ENCODE measurements at regions of chr3 and their contacts with region 1.

Region 1: GRCh38 chr3:53709860-53710674 is 136.2 kb downstream of the CHDH start:
- DNase-seq: peak; percentile 51 to 75 (median 65)
- H3K4me3 ChIP-seq: peak overlapping the region in 2 of 59 donors; percentile 20 to 27
- H3K27ac ChIP-seq: no peak overlapping the region
- H3K27me3 ChIP-seq: no peaks in the 10 kb centered on the region
- CTCF ChIP-seq: peak; percentile 53 to 94 (median 85)

Region 2: GRCh38 chr3:53114011-53114400 is 596.1 kb before region 1 on chr3:
- intact Hi-C with region 1: loop called in 1 of 2 experiments (anchors 10 kb)
- DNase-seq: peak; percentile 66 to 89 (median 83)
- H3K4me3 ChIP-seq: no peak overlapping the region
- H3K27ac ChIP-seq: peak overlapping the region in 23 of 59 donors; percentile 8 to 68 (median 44)
- H3K27me3 ChIP-seq: no peaks in the 10 kb centered on the region
- CTCF ChIP-seq: peak; percentile 83 to 97 (median 93)

Region 3: DNA sequence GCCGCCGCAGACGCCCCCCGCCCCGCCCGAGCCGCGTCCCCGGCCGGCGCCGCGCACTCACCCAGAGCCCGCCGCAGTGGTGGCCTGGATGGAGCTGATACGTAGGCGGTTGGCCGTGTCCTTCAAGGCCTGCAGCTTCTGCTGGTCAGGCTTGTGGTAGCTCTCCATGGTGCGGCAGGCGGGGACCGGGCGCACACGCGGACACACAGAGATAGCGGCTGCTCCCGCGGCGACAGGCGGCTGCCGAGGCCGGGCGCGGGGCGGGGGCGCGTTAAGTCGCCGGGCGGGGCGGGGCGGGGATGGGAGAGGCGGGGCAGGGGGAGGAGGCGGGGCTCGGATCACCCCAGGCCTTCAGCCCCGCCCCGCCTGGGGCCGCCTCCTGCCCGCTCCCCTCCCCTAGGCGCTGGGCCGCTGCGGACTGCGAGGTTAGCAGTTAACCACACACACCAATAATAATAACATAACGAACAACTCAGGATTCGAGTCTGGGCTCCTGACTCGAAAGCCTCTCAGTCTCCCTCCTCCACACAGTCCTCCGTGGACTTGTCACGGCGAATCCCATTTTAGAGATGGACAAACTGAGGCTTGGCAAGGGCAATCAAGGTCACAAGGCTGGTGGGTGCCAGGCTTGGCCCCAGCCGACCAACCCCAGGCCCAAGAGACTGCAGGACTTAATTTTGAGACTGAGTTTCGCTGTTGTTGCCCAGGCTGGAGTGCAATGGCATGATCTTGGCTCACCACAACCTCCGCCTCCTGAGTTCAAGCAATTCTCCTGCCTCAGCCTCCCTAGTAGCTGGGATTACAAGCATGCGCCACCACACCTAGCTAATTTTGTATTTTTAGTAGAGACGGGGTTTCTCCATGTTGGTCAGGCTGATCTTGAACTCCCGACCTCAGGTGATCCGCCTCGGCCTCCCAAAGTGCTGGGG is 454.0 kb before region 1 on chr3 and contains the start of gene TKT:
- intact Hi-C with region 1: loop called in 1 of 2 experiments (anchors 1 kb)
- DNase-seq: peak; percentile 74 to 89 (median 84)
- H3K4me3 ChIP-seq: peak within 1 kb of the TSS; percentile 69 to 97 (median 88)
- H3K27ac ChIP-seq: peak within 1 kb of the TSS; percentile 45 to 95 (median 87)
- H3K27me3 ChIP-seq: no peaks in the 10 kb centered on the region
- CTCF ChIP-seq: peak in 3 of 56 donors; percentile 6 to 14 (median 12)
- total RNA-seq, gene TKT: 130 to 245 (median 170) TPM

Region 4: DNA sequence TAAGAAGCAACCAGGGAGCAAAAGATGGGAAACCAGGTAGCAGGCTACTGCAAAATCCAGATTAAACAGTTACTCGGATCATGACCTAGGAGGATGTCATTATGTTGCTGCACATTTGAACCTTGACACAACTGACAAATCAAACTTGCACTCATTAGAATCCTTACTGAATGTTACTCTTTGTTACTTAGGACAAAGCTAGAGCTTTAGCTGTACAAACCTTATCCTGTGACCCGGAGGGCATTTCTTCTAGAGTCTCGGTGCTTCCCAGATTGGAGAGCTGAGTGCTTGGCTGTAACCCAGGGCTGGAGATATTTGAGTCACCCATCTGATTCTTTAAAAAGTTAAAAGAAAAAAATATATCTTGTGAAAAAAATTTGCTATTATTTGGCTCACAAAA is 406.1 kb before region 1 on chr3:
- intact Hi-C with region 1: loop called (anchors 2 to 5 kb)
- DNase-seq: peak in 1 of 10 donors; percentile 11
- H3K4me3 ChIP-seq: no peak overlapping the region
- H3K27ac ChIP-seq: peak overlapping the region in 52 of 59 donors; percentile 2 to 70 (median 52)
- H3K27me3 ChIP-seq: no peaks in the 10 kb centered on the region
- CTCF ChIP-seq: no peak

Region 5: DNA sequence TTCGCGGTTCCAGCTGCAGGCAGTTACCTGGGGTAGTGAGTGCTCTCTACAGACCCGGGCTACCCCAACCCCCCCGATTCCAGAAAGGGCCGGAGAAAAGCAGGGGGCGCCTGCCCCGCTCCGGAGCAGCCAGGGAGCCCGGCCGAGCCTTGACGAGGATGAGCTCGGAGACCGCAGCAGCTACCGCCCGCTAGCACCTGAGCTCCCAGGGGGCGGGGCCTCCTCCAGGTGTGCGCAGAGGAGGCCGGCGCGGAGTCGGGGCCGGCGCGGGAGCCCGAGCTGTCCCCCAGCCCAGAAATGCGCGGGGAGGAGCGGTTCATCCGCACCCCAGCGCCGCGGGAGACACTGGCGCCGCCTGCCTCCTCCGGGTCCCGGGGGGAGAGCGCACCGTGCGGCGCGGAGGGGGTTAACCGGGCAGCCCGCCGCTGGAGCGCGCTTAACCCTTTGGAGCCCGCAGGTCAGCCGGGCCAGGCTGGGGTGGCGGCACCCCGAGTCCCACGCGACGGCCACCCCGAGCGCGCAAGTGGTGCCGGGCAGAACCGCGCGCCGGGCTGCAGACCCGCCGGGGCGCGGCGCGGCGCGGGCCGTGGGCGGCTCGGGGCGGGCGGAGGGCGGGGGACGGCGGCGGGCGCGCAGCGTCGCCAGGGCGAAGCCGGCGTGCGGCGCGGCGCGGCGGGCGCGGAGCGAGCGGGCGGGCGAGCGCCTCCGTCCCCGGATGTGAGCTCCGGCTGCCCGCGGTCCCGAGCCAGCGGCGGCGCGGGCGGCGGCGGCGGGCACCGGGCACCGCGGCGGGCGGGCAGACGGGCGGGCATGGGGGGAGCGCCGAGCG is 215.9 kb before region 1 on chr3 and contains the start of gene CACNA1D:
- intact Hi-C with region 1: loop called in 1 of 2 experiments (anchors 5 kb)
- DNase-seq: peak in 5 of 10 donors; percentile 13 to 62 (median 45)
- H3K4me3 ChIP-seq: peak within 1 kb of the TSS; percentile 41 to 82 (median 72)
- H3K27ac ChIP-seq: peak within 1 kb of the TSS in 57 of 59 donors; percentile 3 to 90 (median 73)
- H3K27me3 ChIP-seq: no peaks in the 10 kb centered on the region
- CTCF ChIP-seq: peak in 7 of 56 donors; percentile 3 to 25 (median 17)
- total RNA-seq, gene CACNA1D: 42.4 to 137 (median 88.6) TPM

Region 6: GRCh38 chr3:53804821-53805788 is 95.0 kb after region 1 on chr3:
- intact Hi-C with region 1: no loop called
- DNase-seq: peak in 3 of 10 donors; percentile 48 to 78 (median 63)
- H3K4me3 ChIP-seq: no peak overlapping the region
- H3K27ac ChIP-seq: peak overlapping the region in 46 of 59 donors; percentile 2 to 86 (median 64)
- H3K27me3 ChIP-seq: no peaks in the 10 kb centered on the region
- CTCF ChIP-seq: no peak